Left ventricle myocardium inferior (tissue), 1 donor: ENCODE measurements at regions of chr18 and their contacts with region 1.

Region 1: GRCh38 chr18:26022585-26022984 is 67.8 kb downstream of the SS18 start:
- DNase-seq: no peak
- H3K4me3 ChIP-seq: no peak overlapping the region
- H3K27ac ChIP-seq: no peak overlapping the region
- H3K4me1 ChIP-seq: no peaks in the 10 kb centered on the region
- H3K27me3 ChIP-seq: no peaks in the 10 kb centered on the region
- CTCF ChIP-seq: no peak

Region 2: DNA sequence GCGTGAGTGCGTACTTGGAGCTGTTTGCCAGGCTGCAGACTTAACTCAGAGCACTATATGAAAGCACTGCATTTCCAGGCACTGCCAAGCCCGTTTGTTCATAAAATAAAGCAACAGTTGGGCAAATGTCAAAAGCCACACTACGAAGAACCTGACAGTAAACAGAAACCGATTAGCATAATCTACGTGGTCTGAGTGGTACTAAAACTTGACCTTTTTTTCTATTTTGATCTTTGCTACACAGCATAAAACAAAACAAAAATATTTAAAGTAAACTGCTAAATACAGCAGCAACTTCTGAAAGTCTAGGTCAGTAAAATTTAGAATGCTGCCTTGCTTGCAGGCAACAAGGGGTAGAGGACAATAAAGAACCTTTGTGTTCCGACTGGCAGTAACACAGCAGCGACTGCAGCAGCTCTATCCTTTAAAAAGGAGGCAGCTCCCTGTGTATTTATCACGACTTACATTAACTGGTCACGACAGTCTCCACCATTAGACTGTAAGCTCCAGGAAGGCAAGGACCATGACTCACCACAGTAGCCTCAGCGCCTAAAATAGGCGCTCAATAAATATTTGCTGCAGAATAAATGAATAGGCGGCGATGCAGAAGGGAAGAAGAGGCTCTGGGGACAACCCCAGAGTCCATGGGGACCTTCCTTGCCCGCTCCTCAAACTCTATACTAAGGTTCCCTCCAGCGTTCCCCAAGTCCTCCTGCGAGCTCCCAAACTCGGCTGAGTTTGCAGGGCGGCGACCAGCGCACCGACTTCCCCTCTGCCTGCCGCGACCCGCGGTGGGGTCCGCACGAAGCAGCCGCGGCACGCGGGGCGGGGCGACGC is 66.9 kb after region 1 on chr18:
- intact Hi-C with region 1: loop called (anchors 10 kb)
- DNase-seq: no peak
- H3K4me3 ChIP-seq: peak overlapping the region; percentile 87
- H3K27ac ChIP-seq: peak overlapping the region; percentile 98
- H3K4me1 ChIP-seq: peaks cover 46% of the 10 kb centered on the region
- H3K27me3 ChIP-seq: no peaks in the 10 kb centered on the region
- CTCF ChIP-seq: no peak